Psoas muscle (tissue), 8 donors: ENCODE measurements at regions of chr6 and their contacts with region 1.

Region 1: DNA sequence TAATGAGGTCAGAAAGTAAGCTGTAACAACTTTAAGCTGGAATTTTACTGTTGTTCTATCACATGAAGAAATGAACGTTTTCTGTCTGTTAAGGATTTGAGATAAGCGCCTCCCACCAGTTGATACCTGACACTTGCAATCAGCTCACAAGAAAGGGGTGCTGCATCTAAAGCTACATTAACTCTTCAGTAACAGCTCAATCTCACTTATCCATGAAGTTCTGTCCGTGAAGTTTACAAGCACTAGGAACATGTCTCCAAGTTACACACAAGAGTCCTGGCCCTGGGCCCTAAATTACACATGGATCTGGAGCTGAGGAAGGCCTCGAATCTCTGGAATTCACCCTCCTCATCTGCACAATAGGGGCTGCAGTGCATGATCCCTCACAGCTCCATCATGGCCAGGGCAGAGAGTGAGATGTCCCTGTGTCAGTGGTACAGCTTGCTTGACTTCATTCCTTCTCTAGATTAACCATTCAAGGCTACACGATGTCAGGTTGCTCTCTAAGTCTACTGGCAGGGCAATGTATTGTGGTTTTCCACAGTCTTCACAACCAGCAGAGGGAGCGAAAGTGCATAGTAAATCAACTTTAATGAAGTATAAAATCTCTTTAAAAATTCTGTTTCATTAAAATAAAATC is 182.4 kb upstream of the MCHR2 start:
- DNase-seq: no peak
- ATAC-seq: peak; percentile 42 to 80 (median 52)
- H3K4me3 ChIP-seq: no peak overlapping the region
- H3K27ac ChIP-seq: no peak overlapping the region
- H3K4me1 ChIP-seq: peaks cover 9% of the 10 kb centered on the region
- H3K27me3 ChIP-seq: no peaks in the 10 kb centered on the region
- CTCF ChIP-seq: peak; percentile 46

Region 2: GRCh38 chr6:100464903-100465700 is 288.7 kb after region 1 on chr6 and contains the start of gene SIM1:
- intact Hi-C with region 1: loop called in 1 of 2 experiments (anchors 5 kb)
- DNase-seq: peak; percentile 62 to 95
- ATAC-seq: peak; percentile 90 to 98 (median 96)
- H3K4me3 ChIP-seq: peak within 1 kb of the TSS; percentile 84
- H3K27ac ChIP-seq: peak within 1 kb of the TSS; percentile 96
- H3K4me1 ChIP-seq: peaks cover 10% of the 10 kb centered on the region
- H3K27me3 ChIP-seq: peaks cover 0 to 44% (median 4%) of the 10 kb centered on the region in 3 donors
- CTCF ChIP-seq: no peak
- total RNA-seq, gene SIM1: 0.60 to 14.4 (median 5.4) TPM